MCF 10A (cell line): ENCODE measurements at regions of chr17 and their contacts with region 1.

Region 1: DNA sequence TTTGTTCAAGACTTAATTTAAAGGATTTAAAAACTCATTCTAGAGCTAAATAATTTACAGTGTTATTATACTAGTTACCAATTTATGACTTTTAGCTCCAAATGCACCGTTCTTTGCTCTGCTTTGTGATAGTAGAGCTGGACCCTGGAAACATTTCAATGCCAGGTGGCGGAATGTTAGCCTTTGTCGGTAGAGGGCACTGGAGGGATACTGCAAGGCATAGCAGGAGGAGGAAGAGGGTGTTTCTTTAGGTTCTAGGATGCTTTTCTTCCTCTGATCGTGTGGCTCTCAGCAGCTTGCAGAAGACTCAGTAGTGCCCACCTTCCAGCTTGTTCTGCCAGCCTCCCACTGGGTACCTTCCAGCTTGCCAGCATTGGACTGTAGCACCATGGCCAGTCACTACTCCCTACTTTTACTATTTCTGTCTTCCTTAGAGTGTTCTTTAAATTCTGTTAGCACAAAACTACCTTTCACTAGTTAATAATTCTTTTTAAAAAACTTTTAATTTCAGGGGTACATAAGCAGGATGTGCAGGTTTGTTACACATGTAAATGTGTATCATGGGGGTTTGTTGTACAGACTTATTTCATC is 325.3 kb downstream of the UTP18 start:
- DNase-seq: peak; percentile 58
- H3K4me3 Mint-ChIP-seq: no peak overlapping the region
- H3K27ac Mint-ChIP-seq: no peak overlapping the region
- H3K4me1 Mint-ChIP-seq: no peaks in the 10 kb centered on the region
- H3K27me3 Mint-ChIP-seq: peaks cover 12% of the 10 kb centered on the region
- CTCF ChIP-seq: peak; percentile 55

Region 2: GRCh38 chr17:51555153-51555552 is 30.5 kb before region 1 on chr17:
- CTCF ChIA-PET with region 1: no interaction called
- POLR2A ChIA-PET with region 1: no interaction called
- intact Hi-C with region 1: no loop called
- DNase-seq: no peak
- H3K4me3 Mint-ChIP-seq: no peak overlapping the region
- H3K27ac Mint-ChIP-seq: no peak overlapping the region
- H3K4me1 Mint-ChIP-seq: no peaks in the 10 kb centered on the region
- H3K27me3 Mint-ChIP-seq: peaks cover 46% of the 10 kb centered on the region
- CTCF ChIP-seq: no peak

Region 3: DNA sequence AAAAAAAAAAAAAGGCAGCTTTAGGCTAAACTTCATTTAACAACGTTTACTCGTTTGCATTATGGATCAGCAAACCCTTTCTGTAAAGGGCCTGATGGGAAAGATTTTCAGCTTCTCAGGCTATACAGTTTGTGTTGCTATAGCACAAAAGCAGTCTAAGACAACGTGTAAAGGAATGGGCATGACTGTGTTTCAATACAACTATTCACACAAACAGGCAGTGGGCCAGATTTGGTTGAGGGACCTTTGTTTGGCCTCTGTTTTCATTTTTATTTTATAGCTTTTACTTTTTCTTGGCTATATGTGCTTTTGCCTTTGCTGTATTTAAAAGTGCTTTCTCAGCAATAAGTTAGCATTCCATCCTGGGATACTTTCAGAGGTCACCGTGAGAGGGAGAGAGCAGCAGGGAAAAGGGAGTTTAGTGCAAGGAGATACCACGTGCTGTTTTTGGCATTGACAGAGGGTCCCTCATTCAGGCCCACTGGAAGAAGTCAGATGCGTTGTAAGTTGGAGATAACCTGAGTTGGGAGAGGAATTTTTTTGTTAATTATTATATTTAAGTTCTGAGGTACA is 10.3 kb after region 1 on chr17:
- CTCF ChIA-PET with region 1: interaction called, 17 read pairs
- POLR2A ChIA-PET with region 1: interaction called, 3 read pairs
- intact Hi-C with region 1: no loop called
- DNase-seq: no peak
- H3K4me3 Mint-ChIP-seq: no peak overlapping the region
- H3K27ac Mint-ChIP-seq: no peak overlapping the region
- H3K4me1 Mint-ChIP-seq: no peaks in the 10 kb centered on the region
- H3K27me3 Mint-ChIP-seq: no peaks in the 10 kb centered on the region
- CTCF ChIP-seq: no peak

Region 4: DNA sequence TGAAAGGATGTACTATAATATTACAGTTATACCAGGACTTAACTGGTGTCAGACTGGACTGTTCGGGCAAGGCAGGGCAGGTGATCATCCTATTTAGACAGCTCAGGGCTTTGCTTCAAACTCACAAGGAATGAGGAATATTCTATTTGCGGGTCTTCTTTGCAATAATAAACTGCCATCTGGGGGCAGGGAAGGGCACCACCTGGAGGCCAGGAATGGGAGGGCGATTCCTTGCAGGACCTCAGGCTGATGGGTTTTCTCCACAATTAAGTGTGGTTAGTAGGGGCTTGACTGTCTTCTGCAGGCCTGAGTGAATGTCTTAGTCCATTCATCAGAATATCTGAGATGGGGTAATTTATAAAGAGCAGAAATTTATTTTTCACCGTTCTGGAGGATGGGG is 148.9 kb after region 1 on chr17:
- CTCF ChIA-PET with region 1: interaction called, 9 read pairs
- POLR2A ChIA-PET with region 1: no interaction called
- intact Hi-C with region 1: loop called (anchors 1 kb)
- DNase-seq: peak; percentile 33
- H3K4me3 Mint-ChIP-seq: no peak overlapping the region
- H3K27ac Mint-ChIP-seq: no peak overlapping the region
- H3K4me1 Mint-ChIP-seq: no peaks in the 10 kb centered on the region
- H3K27me3 Mint-ChIP-seq: peaks cover 11% of the 10 kb centered on the region
- CTCF ChIP-seq: peak; percentile 74